ENCODE measurements at regions of chr2 and their contacts with region 1.

Region 1: GRCh38 chr2:60707750-60708371 is 48.2 kb upstream of the PAPOLG start:
- DNase-seq: no peak
- H3K4me3 ChIP-seq: no peak overlapping the region
- H3K27ac ChIP-seq: no peak overlapping the region
- H3K27me3 ChIP-seq: no peaks in the 10 kb centered on the region
- CTCF ChIP-seq: peak; percentile 67

Region 2: DNA sequence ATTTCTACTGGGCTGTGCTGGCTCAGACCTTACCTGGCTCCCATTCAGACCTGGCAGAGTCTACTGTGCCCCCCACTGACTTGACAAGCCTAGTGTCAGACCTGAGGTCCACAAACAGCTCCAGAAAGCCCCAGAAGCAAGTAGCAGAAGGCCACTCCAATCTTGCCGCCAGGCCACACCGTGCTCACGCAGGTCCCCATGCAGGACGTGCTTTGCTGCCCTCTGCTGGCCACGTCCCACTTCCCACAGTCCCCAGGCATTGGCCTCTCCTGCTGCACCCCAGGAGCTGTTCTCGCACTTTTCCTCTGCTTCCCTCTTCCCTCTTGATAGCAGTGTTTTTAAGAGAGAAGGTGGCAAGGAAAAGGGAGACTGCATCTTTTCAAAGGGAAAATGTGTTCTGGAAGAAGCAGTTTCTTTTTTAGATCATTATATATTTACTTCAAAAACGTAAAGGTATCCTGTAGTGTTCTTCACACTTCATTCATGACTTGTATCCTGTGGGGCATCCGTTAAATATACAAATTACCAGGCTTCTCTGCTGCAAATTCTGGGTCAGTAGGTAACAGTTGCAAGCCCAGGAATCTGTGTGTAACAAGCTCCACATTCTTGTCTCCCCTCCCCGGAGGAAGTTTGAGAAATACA is 33.2 kb before region 1 on chr2:
- CTCF ChIA-PET with region 1: interaction called, 10 read pairs
- POLR2A ChIA-PET with region 1: interaction called, 7 read pairs
- DNase-seq: peak; percentile 26
- H3K4me3 ChIP-seq: no peak overlapping the region
- H3K27ac ChIP-seq: no peak overlapping the region
- H3K27me3 ChIP-seq: peaks cover 7% of the 10 kb centered on the region
- CTCF ChIP-seq: peak; percentile 92

Region 3: GRCh38 chr2:60695793-60696192 is 12.1 kb before region 1 on chr2:
- CTCF ChIA-PET with region 1: interaction called, 21 read pairs
- POLR2A ChIA-PET with region 1: no interaction called
- DNase-seq: no peak
- H3K4me3 ChIP-seq: no peak overlapping the region
- H3K27ac ChIP-seq: no peak overlapping the region
- H3K27me3 ChIP-seq: no peaks in the 10 kb centered on the region
- CTCF ChIP-seq: no peak

Region 4: DNA sequence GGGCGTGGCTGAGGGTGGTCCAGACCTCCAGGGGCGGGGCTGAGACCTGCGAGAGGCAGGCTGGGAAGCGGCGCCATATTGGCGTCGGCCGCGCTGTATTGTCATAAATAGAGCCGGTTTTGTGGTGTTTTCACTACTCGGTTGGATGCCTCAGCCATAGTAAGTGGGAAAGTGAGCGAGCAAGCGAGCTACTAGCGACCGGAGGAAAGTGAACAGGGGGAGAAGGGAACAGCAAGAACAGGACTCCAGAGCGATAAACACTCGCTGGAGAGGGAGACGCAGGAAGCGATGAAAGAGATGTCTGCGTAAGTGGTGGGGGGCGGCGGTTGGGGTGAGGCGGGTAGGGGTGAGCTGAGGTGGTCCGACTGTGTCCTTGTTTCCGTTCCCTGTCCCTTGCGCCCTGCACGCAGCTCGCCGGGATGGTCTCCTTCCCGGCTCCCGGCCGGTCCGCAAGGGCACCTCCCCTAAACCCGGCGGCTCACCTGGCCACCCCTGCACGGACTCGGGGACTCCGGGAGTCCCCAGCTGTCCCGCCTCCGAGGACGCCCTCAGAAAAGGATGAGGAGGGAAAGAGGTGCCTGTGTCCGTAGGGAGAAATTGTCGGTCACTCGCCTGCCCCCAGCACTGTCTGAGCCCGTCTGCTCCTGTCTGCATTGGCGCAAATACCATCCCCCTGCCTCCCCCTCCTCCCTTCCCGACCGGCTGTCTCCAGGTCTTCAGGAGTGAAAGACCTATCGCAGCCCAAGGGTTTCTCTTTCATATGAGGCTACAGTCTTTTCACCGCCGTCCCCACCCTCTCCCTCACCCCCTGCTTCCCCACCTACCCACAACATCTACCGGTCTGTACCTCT is 48.6 kb after region 1 on chr2 and contains the start of gene PAPOLG:
- CTCF ChIA-PET with region 1: interaction called, 12 read pairs
- POLR2A ChIA-PET with region 1: interaction called, 3 read pairs
- DNase-seq: peak; percentile 74
- H3K4me3 ChIP-seq: peak within 1 kb of the TSS; percentile 95
- H3K27ac ChIP-seq: peak within 1 kb of the TSS; percentile 70
- H3K27me3 ChIP-seq: no peaks in the 10 kb centered on the region
- CTCF ChIP-seq: no peak
- polyA plus RNA-seq, gene PAPOLG: 10.3 and 15.3 TPM in 2 replicates

Region 5: DNA sequence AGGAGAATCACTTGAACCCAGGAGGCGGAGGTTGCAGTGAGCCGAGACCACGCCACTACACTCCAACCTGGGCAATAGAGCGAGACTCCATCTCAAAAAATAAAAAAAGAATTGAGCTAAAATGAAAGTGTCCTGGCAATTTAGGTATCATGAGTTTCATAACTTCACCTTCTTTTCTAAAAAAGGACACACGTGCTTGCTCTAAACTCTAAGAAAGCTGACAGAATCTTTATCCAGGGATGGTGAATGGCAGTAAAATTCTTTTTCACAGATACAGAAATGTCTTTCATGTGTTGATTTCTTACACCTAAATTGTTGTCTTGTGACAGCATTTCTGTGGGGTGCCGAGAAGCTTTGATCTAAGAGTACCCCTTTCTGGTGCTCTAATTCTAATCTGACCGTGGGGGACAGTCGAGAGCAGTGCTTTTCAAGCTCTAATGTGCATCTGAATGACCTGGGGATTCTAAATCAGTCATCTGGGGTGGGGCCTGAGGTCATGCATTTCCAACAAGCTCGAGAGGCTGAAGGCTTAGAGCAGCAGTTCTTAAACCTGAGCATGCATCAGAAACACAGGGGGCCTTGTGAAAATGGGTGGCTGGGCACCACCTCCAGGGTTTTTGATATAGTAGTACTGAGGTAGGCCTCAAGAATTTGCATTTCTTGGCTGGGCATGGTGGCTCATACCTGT is 131.4 kb after region 1 on chr2:
- CTCF ChIA-PET with region 1: no interaction called
- POLR2A ChIA-PET with region 1: no interaction called
- DNase-seq: no peak
- H3K4me3 ChIP-seq: no peak overlapping the region
- H3K27ac ChIP-seq: no peak overlapping the region
- H3K27me3 ChIP-seq: peaks cover 15% of the 10 kb centered on the region
- CTCF ChIP-seq: no peak

Region 6: DNA sequence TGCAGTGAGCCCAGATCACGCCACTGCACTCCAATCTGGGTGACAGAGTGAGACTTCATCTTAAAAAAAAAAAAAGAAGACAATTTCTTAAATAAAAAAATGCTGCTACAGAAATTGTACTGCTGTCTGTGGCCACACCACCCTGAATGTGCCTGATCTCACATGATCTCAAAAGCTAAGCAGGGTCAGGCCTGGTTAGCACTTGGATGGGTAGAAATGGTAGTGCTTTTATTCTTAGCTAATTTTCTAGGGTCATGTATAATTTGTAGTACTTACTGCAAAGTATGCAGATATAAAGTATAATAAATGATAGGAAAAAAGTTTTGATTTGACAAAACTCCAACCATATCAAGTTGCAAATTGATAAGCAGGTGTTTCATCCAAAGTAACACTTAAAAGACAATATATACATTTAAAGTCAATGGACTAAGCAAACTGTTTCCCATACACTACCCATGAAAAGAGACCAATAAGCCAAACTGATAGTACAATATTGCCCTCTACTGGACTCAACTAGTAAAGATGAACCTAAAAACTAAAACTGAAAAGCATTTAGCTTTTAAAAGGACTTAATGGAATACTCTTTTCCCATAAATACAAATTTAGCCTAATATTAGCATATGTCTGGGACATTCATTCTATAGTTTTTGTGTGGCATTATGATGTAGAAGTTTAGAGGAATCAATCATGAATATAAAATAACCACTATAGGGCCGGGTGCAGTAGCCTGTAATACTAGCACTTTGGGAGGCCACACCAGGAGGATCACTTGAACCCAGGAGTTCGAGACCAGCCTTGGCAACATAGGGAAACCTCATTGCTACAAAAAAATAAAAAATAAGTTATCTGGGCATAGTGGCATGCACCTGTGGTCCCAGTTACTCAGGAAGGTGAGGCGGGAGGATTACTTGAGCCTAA is 291.0 kb after region 1 on chr2:
- CTCF ChIA-PET with region 1: interaction called, 137 read pairs
- POLR2A ChIA-PET with region 1: no interaction called
- DNase-seq: peak; percentile 13
- H3K4me3 ChIP-seq: no peak overlapping the region
- H3K27ac ChIP-seq: no peak overlapping the region
- H3K27me3 ChIP-seq: no peaks in the 10 kb centered on the region
- CTCF ChIP-seq: peak; percentile 67

Region 7: DNA sequence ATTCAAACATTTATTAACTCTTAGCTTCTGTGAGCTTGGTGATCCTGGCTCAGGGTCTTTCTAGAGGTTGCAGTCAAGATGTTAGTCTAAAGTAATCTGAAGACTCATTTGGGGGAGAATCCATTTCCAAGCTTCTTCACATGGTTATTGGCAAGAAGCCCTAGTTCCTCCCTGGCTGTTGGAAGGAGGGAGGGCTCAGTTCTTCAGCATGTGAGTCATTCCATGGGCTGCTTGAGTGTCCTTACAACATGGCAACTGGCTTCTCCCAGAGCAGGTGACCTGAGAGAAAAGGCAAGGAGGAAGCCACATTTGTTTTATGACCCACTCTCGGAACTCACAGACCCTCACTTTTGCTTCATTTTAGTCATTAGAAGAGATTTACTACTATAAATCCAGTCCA is 443.6 kb after region 1 on chr2:
- CTCF ChIA-PET with region 1: interaction called, 10 read pairs
- POLR2A ChIA-PET with region 1: no interaction called
- DNase-seq: no peak
- H3K4me3 ChIP-seq: no peak overlapping the region
- H3K27ac ChIP-seq: no peak overlapping the region
- H3K27me3 ChIP-seq: no peaks in the 10 kb centered on the region
- CTCF ChIP-seq: no peak

Measured in AG04450 (cell line).